GM12878 (cell line): ENCODE measurements at regions of chr16 and their contacts with region 1.

Region 1: DNA sequence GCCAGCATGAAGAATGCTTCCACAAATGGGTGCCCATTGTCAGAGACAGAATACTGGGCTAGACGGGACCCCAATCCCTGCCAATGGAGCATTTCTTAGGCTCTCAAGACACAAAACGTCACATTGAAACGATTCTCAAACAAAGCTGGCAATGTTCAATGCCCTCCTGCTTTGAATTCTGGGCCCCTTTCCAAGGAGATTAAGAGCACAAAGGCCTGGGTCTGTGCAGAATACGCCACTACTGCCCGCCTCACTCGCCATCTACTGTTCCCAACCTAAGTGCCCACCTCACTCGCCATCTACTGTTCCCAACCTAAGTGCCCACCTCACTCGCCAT is 9.7 kb downstream of the CFAP20 start:
- DNase-seq: no peak
- ATAC-seq: no peak
- H3K4me3 ChIP-seq: no peak overlapping the region
- H3K27ac ChIP-seq: no peak overlapping the region
- H3K4me1 ChIP-seq: peaks cover 12% of the 10 kb centered on the region
- H3K27me3 ChIP-seq: no peaks in the 10 kb centered on the region
- CTCF ChIP-seq: no peak
- EP300 ChIP-seq: no peak
- POLR2A ChIP-seq: no peak
- RAD21 ChIP-seq: no peak

Region 2: DNA sequence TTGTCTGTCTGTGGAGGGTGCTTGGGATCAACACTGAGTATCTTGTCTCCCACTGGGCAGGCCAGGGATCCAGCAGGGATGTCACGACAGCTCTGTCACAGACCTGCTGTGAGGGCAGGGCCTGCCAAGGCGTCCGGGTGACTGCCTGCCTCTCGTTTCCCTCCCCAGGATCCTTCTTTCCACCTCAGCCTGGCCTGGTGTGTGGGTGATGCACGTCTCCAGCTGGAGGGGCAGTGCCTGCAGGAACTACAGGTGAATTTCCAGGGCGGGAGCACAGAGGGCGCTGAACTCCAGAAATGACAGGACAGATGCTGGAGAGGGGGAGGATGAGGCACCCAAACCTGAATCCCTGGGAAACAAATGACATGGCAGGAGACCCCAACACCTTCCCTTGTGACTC is 100.7 kb before region 1 on chr16:
- CTCF ChIA-PET with region 1: interaction called, 19 read pairs
- POLR2A ChIA-PET with region 1: interaction called, 5 read pairs
- RAD21 ChIA-PET with region 1: interaction called, 27 read pairs
- SMC1A ChIA-PET with region 1: interaction called, 17 read pairs
- in situ Hi-C with region 1: no loop called
- intact Hi-C with region 1: loop called (anchors 2 kb)
- DNase-seq: no peak
- ATAC-seq: no peak
- H3K4me3 ChIP-seq: no peak overlapping the region
- H3K27ac ChIP-seq: no peak overlapping the region
- H3K4me1 ChIP-seq: no peaks in the 10 kb centered on the region
- H3K27me3 ChIP-seq: no peaks in the 10 kb centered on the region
- CTCF ChIP-seq: 0 out of 6 replicates have a peak, but pooled peaks of 1 of the 3 experiments have one; percentile 7
- EP300 ChIP-seq: no peak
- POLR2A ChIP-seq: no peak
- RAD21 ChIP-seq: no peak